WTC11 (cell line): ENCODE measurements at regions of chr10 and their contacts with region 1.

Region 1: DNA sequence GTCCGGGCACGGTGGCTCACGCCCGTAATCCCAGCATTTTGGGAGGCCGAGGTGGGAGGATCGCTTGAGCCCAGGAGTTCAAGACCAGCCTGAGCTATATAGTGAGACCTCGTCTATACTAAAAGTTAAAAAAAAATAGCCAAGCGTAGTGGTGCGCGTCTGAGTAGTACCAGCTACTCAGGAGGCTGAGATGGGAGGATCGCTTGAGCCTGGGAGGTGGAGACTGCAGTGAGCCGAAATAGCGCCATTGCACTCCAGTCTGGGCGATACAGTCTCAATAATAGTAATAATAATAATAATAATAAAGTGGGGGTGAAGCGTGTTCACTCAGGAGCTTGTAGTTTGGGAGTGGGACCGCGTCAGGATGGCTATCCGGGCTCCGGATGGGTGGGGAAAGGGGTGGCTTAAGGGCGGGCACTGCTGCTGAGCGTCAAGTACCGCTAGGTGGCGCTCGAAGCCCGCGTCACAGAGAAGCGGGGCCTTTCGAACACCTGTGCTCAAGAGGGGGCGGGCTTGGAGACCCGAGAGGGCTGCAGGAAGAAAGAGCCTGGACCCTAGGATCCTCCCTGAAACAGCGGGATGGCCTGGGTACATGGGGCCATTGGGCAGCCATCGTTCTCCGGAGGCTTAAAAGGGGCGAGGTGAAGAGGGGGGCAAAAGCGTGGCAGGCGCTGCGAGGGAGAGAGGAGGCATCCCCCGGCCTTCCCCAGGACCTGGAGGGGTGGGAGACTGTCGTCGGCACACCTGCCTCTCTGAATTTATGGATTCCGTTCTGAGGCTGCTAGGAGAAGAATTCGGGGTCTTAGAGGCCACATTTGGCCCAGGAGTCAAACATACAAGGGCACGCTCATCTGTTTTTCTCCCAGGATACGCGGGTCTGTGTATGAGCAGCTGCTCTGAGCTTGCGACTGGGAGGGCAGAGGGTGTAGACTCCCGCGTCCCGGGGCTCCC is 14.5 kb downstream of the LBX1 start:
- DNase-seq: peak; percentile 93
- ATAC-seq: peak; percentile 65
- H3K4me3 Mint-ChIP-seq: peak overlapping the region; percentile 76
- H3K27ac Mint-ChIP-seq: no peak overlapping the region
- H3K4me1 Mint-ChIP-seq: peaks cover 30% of the 10 kb centered on the region
- H3K27me3 Mint-ChIP-seq: peaks cover 96% of the 10 kb centered on the region
- CTCF ChIP-seq: peak; percentile 83

Region 2: DNA sequence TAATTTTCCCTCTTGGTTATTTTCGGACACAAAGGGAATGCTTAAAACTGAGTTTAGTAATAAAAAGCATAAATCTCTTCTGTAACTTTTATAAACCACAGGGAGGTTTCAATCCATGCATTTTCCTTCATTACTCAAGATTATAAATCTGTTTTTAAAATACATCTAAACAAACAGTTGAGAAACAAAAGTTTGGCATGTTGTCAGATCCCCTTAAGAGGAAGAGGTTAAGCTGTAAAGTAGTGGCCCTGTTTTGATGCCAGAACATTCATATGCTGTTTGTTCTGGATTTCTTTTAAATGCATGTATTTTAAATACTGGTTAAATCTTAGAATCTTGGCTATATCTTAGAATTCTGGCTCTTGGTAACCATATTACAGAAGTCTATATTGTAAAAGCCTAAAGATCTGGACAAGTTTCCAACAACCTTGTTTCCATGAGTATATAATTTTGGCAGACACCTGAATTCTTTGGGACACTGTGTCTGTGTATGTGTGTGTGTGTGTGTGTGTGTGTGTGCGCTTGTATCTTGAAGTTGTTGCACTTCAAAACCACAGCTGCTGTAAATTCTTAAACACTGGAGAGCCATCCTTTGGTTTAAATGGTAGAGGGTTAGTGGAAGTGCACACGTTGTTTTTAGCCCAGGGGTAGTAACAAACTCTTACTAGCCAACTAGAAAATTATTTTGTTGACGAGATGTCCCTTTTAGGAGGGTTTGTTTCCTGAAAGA is 252.2 kb before region 1 on chr10:
- CTCF ChIA-PET with region 1: no interaction called
- POLR2A ChIA-PET with region 1: no interaction called
- DNase-seq: no peak
- ATAC-seq: no peak
- H3K4me3 Mint-ChIP-seq: no peak overlapping the region
- H3K27ac Mint-ChIP-seq: no peak overlapping the region
- H3K4me1 Mint-ChIP-seq: no peaks in the 10 kb centered on the region
- H3K27me3 Mint-ChIP-seq: no peaks in the 10 kb centered on the region
- CTCF ChIP-seq: no peak

Region 3: DNA sequence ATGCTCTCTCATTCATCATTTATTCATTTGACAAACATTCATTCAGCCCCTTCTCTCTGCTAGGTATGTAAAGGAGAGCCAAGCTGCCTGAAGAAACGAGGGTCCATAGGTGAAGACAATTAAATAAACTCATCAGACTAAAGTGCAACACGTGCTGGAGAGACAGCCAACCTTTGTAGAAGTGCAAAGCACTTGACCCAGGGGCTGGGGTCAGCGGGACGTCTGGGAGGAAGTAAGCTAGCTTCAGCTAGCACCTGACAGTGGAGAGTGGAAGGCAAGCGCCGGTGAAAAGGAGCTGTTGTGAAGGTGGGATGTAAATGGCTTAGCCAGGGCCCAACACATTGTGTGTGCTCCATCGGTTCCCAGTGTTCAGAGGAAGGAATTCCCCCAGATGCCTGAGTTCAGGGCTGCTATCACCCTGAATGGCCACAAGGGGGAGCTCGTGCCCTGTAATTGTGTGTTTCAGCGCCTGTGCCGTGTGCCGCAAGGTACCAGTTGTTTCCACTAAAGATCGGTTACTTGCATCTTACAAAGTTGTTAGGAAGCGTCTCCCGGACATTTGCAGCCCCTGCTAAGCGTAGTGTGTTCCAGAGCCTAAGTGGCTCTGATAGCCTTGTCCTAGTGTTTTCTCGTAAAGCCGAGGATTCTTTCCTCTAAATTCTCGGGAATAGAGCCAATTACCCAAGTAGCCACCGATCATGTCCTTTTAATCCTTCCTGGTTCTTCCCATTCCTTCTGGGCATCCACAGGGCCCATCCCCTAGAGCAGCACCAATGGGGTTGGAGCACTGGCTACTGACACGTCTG is 53.0 kb before region 1 on chr10:
- CTCF ChIA-PET with region 1: interaction called, 63 read pairs
- POLR2A ChIA-PET with region 1: no interaction called
- DNase-seq: peak; percentile 83
- ATAC-seq: peak; percentile 96
- H3K4me3 Mint-ChIP-seq: peak overlapping the region; percentile 55
- H3K27ac Mint-ChIP-seq: no peak overlapping the region; the same call in 1 of the 2 replicates
- H3K4me1 Mint-ChIP-seq: peaks cover 37% of the 10 kb centered on the region
- H3K27me3 Mint-ChIP-seq: peaks cover 52% of the 10 kb centered on the region
- CTCF ChIP-seq: peak; percentile 97

Region 4: GRCh38 chr10:101238732-101239105 is 24.0 kb after region 1 on chr10:
- CTCF ChIA-PET with region 1: interaction called, 95 read pairs
- POLR2A ChIA-PET with region 1: no interaction called
- DNase-seq: peak; percentile 55
- ATAC-seq: peak; percentile 50
- H3K4me3 Mint-ChIP-seq: no peak overlapping the region
- H3K27ac Mint-ChIP-seq: no peak overlapping the region
- H3K4me1 Mint-ChIP-seq: peaks cover 25% of the 10 kb centered on the region
- H3K27me3 Mint-ChIP-seq: peaks cover 86% of the 10 kb centered on the region
- CTCF ChIP-seq: no peak

Region 5: DNA sequence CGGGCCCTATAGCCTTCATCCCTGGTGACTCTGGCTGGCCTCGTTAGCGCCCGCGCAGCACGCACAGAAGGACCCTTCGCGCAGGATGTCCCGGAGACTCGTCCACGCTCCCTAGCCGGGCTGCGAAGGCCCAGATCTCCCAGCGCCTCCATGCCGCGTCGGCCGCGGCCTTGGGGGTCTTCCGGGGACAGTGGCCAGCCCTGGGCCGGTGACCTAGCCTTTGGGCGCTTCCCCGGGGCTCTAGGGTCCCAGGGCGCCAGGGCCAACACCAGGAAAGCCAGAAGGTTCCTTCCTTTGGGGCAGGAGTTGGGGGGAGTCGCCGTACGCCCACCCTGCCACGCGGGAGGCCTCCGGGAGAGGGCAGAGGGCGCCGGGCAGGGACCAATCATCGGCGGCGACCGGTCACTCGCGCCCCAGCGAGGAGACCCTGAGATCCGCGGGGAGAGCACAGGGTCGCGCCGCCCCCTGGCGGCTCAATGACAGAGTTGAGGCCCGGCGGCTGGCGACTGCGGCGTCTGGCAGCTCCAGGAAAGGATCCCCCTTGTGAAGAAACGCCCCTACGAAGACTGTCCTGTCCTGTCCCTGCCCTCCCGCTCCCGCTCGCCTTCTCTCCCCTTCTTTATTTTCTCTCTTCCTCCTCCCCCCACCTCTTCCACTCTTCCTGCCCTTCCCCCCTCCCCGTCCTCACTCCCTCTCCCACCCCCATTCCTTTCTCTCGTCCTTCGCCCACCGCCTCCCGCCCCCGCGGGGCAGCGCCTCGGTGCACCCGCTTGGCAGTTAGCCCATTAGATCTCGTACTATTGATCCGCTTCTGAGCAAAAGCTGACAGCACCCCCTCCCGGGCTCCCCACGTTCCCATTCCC is 76.8 kb after region 1 on chr10:
- CTCF ChIA-PET with region 1: interaction called, 203 read pairs
- POLR2A ChIA-PET with region 1: no interaction called
- DNase-seq: peak; percentile 87
- ATAC-seq: peak; percentile 65
- H3K4me3 Mint-ChIP-seq: peak overlapping the region; percentile 80
- H3K27ac Mint-ChIP-seq: no peak overlapping the region
- H3K4me1 Mint-ChIP-seq: peaks cover 39% of the 10 kb centered on the region
- H3K27me3 Mint-ChIP-seq: peaks cover 97% of the 10 kb centered on the region
- CTCF ChIP-seq: peak; percentile 80

Region 6: DNA sequence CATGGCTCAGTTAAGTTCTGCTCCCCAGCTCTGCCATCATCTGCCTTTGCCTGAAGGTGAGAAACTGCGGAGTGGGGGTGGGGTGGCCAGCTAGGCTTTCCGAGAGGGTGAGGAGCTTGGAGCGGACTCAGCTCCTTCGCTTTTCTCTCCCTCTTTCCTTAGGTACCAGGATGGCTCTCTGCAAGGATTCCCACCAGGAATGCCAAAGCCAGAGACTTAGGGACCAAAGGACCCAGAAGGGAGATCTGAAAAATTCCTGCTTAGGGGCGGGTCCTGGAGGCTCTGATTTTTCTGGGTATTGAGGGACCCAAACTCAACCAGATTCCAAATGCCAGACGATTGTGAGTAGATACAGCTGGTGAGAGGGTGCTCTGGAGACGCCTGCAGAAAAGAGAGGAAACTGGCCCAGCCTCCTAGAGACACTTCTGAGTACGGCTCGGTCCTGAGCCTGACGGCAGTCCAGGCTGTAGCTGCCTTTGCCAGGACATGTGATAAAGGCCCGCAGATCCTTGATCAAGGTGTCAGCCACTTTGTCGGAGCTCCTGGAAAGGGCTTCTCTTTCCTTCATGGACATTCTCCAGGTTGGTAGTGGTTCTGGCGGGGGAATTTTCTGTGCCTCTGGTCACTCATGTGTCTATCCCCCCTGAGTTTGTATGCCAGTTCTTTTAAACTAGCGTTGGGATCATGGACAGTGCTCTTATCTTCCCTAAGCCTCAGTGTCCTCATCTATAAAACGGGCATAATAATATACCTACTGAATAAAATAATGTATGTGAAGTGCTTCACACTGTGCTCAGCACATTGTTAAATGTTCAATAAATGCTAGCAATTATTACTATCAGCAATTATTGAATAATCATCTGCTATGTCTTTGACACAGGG is 96.7 kb after region 1 on chr10:
- CTCF ChIA-PET with region 1: interaction called, 18 read pairs
- POLR2A ChIA-PET with region 1: interaction called, 3 read pairs
- DNase-seq: peak; percentile 74
- ATAC-seq: peak; percentile 85
- H3K4me3 Mint-ChIP-seq: peak overlapping the region; percentile 52
- H3K27ac Mint-ChIP-seq: peak overlapping the region; percentile 50; the same call in 1 of the 2 replicates
- H3K4me1 Mint-ChIP-seq: peaks cover 23% of the 10 kb centered on the region
- H3K27me3 Mint-ChIP-seq: peaks cover 6% of the 10 kb centered on the region; the same call in 1 of the 2 replicates
- CTCF ChIP-seq: no peak

Region 7: DNA sequence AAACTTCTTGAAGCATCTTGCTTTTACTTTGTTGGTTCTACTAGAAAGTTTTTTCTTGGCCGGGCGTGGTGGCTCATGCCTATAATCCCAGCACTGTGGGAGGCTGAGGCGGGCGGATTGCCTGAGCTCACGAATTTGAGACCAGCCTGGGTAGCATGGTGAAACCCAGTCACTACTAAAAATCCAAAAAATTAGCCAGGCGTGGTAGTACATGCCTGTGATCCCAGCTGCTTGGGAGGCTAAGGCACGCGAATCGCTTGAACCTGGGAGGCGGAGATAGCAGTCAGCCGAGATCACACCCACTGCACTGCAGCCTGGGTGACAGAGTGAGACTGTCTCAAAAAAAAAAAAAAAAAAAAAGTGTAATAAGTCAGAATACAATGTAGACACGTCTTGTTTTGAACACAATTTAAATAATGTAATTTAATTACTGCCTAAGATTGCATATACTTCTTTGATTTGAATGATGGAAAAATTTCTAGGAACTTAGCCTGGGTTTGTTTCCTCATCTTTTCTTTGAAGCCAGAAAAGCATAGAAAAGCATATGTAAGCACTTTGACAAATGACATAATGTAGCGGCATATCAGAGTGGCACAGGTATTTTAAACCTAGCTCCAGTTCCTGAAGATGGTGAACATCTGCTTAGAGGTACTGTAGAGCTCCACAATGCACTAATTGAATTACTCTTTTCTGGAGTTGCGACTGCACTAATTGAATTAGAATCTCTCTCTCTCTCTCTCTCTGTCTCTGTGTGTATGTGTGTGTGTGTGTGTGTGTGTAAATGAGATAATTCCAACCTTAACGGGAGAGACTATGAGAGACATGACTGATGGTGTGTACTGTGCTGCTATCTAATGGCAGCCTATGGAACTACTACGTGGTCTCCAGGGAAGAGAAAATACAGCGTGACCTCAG is 227.1 kb after region 1 on chr10:
- CTCF ChIA-PET with region 1: interaction called, 16 read pairs
- POLR2A ChIA-PET with region 1: no interaction called
- DNase-seq: peak; percentile 17
- ATAC-seq: peak; percentile 98
- H3K4me3 Mint-ChIP-seq: no peak overlapping the region
- H3K27ac Mint-ChIP-seq: no peak overlapping the region
- H3K4me1 Mint-ChIP-seq: peaks cover 19% of the 10 kb centered on the region
- H3K27me3 Mint-ChIP-seq: no peaks in the 10 kb centered on the region
- CTCF ChIP-seq: no peak